ENCODE measurements at regions of chr12 and their contacts with region 1.

Region 1: DNA sequence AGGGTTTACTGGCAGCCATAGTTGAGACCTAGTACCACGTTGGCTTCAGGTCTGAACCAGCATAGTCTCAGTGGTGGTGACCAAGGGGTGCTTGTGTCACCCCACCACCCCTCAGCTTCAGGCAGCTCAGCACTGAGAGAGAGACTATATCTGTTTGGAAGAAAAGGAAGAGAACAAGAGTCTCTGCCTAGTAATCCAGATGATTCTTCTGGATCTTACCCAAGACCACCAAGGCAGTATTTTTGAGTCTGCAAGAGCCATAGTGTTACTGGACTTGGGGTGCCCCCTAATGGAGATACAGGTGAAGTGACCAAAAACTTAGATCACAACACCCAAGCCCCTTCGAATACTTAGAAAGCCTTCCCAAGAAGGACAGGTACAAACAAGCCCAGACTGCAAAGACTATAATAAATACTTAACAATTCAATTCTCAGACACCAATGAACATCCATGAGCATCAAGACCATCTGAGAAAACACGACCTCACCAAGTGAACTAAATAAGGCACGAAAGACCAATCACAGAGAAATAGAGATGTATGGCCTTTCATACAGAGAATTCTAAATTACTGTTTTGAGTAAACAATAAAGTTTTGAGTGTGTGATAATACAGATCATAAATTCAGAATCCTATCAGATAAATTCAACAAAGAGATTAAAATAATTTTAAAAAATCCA is 107.0 kb downstream of the HELB start:
- DNase-seq: peak; percentile 67
- H3K4me3 ChIP-seq: no peak overlapping the region
- H3K27ac ChIP-seq: no peak overlapping the region
- H3K4me1 ChIP-seq: peaks cover under 1% of the 10 kb centered on the region
- CTCF ChIP-seq: peak; percentile 94

Region 2: DNA sequence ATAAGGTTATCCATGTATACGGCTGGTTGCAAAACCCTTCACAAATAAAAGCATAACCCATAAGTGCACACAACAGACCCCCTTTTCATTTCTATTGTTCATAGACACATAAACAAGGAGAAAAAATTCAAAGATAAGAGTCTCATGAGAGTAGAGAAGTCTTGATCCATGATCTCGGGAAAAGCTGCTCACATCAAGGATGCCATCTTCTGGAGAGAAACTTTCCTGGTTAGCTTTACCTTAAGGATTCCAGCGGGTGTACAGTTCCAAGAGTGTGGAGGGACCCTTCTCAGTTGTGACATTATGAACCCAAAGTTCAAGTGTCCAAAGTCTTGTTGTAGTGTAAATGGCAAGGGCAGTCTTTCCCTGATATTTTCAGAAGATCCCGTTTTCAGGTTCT is 423.3 kb before region 1 on chr12:
- CTCF ChIA-PET with region 1: no interaction called
- POLR2A ChIA-PET with region 1: no interaction called
- intact Hi-C with region 1: loop called (anchors 5 kb)
- DNase-seq: no peak
- H3K4me3 ChIP-seq: no peak overlapping the region
- H3K27ac ChIP-seq: no peak overlapping the region
- H3K4me1 ChIP-seq: no peaks in the 10 kb centered on the region
- CTCF ChIP-seq: no peak

Region 3: DNA sequence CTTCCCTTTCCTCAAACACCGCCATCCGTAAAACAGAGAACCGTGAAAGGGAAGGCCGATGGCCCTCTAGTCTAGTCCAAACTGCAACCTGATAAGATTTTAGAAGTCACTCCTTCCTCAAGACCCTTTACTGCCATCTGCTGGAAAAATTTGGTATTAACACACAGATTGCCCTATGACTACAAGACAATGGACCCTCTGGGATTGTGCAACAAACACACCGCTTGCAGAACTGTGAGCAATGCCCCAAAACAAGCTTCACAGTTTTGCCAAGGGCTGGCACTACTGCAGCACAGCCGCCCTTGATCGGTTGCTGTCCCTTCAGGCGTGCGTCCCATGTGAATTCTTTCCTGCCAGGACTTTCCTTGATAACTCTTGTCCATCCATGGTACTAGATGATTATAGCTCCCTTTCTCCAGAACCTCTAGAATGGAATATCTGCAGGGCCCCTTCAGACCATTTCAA is 301.9 kb before region 1 on chr12:
- CTCF ChIA-PET with region 1: no interaction called
- POLR2A ChIA-PET with region 1: interaction called, 4 read pairs
- intact Hi-C with region 1: loop called (anchors 1 kb)
- DNase-seq: peak; percentile 82
- H3K4me3 ChIP-seq: no peak overlapping the region
- H3K27ac ChIP-seq: no peak overlapping the region
- H3K4me1 ChIP-seq: peaks cover 4% of the 10 kb centered on the region
- CTCF ChIP-seq: peak; percentile 85

Region 4: GRCh38 chr12:66144791-66145754 is 264.3 kb before region 1 on chr12:
- CTCF ChIA-PET with region 1: no interaction called
- POLR2A ChIA-PET with region 1: no interaction called
- intact Hi-C with region 1: loop called (anchors 10 kb)
- DNase-seq: peak; percentile 44
- H3K4me3 ChIP-seq: no peak overlapping the region
- H3K27ac ChIP-seq: peak overlapping the region; percentile 29
- H3K4me1 ChIP-seq: peaks cover 8% of the 10 kb centered on the region
- CTCF ChIP-seq: peak; percentile 75

Region 5: GRCh38 chr12:66269757-66270383 is 139.5 kb before region 1 on chr12:
- CTCF ChIA-PET with region 1: no interaction called
- POLR2A ChIA-PET with region 1: no interaction called
- intact Hi-C with region 1: loop called (anchors 10 kb)
- DNase-seq: peak; percentile 62
- H3K4me3 ChIP-seq: no peak overlapping the region
- H3K27ac ChIP-seq: no peak overlapping the region
- H3K4me1 ChIP-seq: peaks cover 32% of the 10 kb centered on the region
- CTCF ChIP-seq: peak; percentile 84

Region 6: DNA sequence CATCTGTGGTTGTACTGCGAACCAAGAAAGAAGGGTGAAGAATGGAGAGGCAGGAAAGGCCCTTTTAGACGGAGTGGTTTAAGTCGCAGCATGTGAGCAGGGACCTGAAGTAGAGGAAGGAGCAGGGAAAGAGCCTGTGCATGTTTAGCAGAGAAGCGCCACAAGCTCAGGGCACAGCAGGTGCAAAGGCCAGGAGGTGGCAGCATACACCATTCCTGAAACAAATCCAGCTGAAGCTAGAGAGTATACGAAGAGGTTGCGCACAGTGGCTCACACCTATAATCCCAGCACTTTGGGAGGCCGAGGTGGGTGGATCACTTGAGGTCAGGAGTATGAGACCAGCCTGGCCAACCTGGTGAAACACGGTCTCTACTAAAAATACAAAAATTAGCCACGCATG is 57.1 kb before region 1 on chr12:
- CTCF ChIA-PET with region 1: no interaction called
- POLR2A ChIA-PET with region 1: no interaction called
- intact Hi-C with region 1: loop called (anchors 1 kb)
- DNase-seq: peak; percentile 67
- H3K4me3 ChIP-seq: no peak overlapping the region
- H3K27ac ChIP-seq: no peak overlapping the region
- H3K4me1 ChIP-seq: no peaks in the 10 kb centered on the region
- CTCF ChIP-seq: peak; percentile 70

Region 7: DNA sequence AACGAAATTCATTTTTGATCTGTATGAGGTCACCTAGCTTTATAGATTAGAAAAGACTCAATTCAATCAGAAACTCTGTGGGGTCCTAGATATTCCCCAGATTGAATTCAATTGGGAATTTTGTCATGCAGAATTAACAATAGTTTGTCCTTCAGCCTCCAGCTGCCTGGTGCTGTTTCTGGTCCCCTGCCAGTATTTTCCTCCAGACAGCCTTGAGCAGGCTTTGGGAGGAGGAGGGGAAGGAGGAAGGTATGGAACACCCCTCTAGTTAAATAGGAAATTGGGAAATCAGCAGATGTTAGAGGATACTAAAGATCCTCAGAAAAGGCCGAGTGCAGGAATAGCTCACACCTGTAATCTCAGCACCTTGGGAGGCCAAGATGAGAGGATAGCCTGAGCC is 259.0 kb after region 1 on chr12:
- CTCF ChIA-PET with region 1: no interaction called
- POLR2A ChIA-PET with region 1: no interaction called
- intact Hi-C with region 1: no loop called
- DNase-seq: no peak
- H3K4me3 ChIP-seq: no peak overlapping the region
- H3K27ac ChIP-seq: no peak overlapping the region
- H3K4me1 ChIP-seq: no peaks in the 10 kb centered on the region
- CTCF ChIP-seq: no peak

Measured in OCI-LY7 (cell line).